PC-9 (cell line): ENCODE measurements at regions of chr9 and their contacts with region 1.

Region 1: GRCh38 chr9:133803028-133803585 is 65.0 kb upstream of the SARDH start:
- DNase-seq: no peak
- H3K4me3 ChIP-seq: no peak overlapping the region
- H3K27ac ChIP-seq: no peak overlapping the region
- H3K4me1 ChIP-seq: no peaks in the 10 kb centered on the region
- H3K27me3 ChIP-seq: no peaks in the 10 kb centered on the region
- CTCF ChIP-seq: no peak

Region 2: GRCh38 chr9:134320126-134320867 is 517.2 kb after region 1 on chr9:
- CTCF ChIA-PET with region 1: interaction called, 11 read pairs
- POLR2A ChIA-PET with region 1: no interaction called
- intact Hi-C with region 1: no loop called
- DNase-seq: no peak
- H3K4me3 ChIP-seq: no peak overlapping the region
- H3K27ac ChIP-seq: no peak overlapping the region
- H3K4me1 ChIP-seq: peaks cover 8% of the 10 kb centered on the region
- H3K27me3 ChIP-seq: no peaks in the 10 kb centered on the region
- CTCF ChIP-seq: no peak